ENCODE measurements at regions of chr1 and their contacts with region 1.

Region 1: GRCh38 chr1:223556414-223557129 is 108.9 kb downstream of the CAPN8 start:
- DNase-seq: peak; percentile 46 to 61
- ATAC-seq: peak; percentile 83 to 98
- H3K4me3 ChIP-seq: no peak overlapping the region
- H3K27ac ChIP-seq: no peak overlapping the region; a peak in 1 of 6 replicates
- H3K4me1 ChIP-seq: no peaks in the 10 kb centered on the region
- CTCF ChIP-seq: peak; percentile 68
- EP300 ChIP-seq: no peak
- POLR2A ChIP-seq: no peak
- RAD21 ChIP-seq: peak; percentile 83 to 94

Region 2: DNA sequence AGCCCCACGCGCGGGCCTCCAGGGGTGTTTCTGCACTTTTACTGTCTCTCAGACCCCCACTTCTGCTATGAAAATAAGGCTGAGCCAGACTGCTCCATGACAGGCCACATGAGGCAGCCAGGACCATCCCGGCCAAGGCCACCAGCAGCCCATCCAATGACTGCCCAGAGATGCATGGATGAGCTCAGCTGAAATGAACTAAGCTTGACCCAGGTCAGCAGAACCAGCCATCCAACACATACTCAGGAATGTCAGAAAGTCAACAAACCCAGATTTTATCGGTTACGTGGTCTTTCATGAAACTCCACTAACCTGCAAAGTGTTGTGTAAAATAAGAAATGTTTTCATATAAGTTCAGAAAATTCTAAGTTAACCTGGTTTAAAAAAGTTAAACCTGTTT is 112.1 kb before region 1 on chr1:
- CTCF ChIA-PET with region 1: no interaction called
- POLR2A ChIA-PET with region 1: no interaction called
- DNase-seq: no peak
- ATAC-seq: no peak
- H3K4me3 ChIP-seq: no peak overlapping the region
- H3K27ac ChIP-seq: no peak overlapping the region
- H3K4me1 ChIP-seq: no peaks in the 10 kb centered on the region
- CTCF ChIP-seq: no peak
- EP300 ChIP-seq: no peak
- POLR2A ChIP-seq: no peak
- RAD21 ChIP-seq: no peak

Region 3: DNA sequence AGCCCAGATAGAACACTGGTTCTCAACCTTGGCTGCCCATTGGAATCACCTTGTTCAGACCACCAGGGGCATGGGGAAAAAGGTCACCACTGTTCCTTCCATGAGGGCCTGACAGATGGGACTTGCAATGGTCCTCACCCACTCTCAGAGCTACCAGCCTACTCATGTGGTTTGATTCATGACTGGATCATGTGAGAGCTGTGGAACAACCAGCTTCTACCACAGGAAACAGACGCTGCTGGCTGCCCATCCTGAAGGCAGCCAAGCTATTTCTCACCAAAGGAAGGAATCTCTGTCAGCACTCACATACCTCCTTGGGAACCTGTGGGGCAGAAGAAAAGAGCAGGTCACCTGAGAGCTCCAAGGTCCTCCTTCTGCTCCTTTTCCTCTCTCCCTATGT is 55.4 kb after region 1 on chr1:
- CTCF ChIA-PET with region 1: interaction called, 65 read pairs
- POLR2A ChIA-PET with region 1: no interaction called
- DNase-seq: no peak
- ATAC-seq: no peak
- H3K4me3 ChIP-seq: no peak overlapping the region
- H3K27ac ChIP-seq: no peak overlapping the region
- H3K4me1 ChIP-seq: no peaks in the 10 kb centered on the region
- CTCF ChIP-seq: no peak
- EP300 ChIP-seq: no peak
- POLR2A ChIP-seq: no peak
- RAD21 ChIP-seq: no peak

Region 4: DNA sequence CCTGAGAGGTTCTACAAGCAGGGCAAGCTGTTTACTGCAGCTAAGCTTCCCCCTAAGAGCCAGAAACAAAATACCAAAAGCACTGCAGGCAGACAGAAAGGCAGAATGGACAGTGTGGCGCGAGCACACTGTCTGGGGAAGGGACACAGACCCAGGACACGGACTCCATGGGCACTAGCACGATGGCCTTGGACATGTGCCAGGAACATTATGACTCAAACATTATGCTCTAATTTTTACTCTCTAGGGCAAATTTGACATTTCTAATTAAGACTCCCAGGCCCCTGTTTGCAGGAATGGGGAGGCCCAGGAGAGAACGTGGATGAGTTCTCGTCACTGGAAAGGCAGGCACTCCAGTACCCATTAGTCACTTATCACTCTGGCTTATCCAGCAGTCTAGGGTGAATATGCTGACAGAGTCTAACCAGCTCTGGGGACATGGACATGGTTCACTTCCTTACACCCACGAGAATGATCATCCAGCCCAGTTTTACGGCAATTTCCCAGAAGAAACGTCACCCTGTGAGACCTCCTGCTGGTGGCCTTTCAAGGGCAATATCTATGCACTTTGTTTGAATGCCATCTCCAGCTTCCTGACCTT is 63.8 kb after region 1 on chr1:
- CTCF ChIA-PET with region 1: interaction called, 17 read pairs
- POLR2A ChIA-PET with region 1: no interaction called
- DNase-seq: no peak
- ATAC-seq: no peak
- H3K4me3 ChIP-seq: no peak overlapping the region
- H3K27ac ChIP-seq: no peak overlapping the region
- H3K4me1 ChIP-seq: no peaks in the 10 kb centered on the region
- CTCF ChIP-seq: no peak
- EP300 ChIP-seq: no peak
- POLR2A ChIP-seq: no peak
- RAD21 ChIP-seq: no peak

Region 5: DNA sequence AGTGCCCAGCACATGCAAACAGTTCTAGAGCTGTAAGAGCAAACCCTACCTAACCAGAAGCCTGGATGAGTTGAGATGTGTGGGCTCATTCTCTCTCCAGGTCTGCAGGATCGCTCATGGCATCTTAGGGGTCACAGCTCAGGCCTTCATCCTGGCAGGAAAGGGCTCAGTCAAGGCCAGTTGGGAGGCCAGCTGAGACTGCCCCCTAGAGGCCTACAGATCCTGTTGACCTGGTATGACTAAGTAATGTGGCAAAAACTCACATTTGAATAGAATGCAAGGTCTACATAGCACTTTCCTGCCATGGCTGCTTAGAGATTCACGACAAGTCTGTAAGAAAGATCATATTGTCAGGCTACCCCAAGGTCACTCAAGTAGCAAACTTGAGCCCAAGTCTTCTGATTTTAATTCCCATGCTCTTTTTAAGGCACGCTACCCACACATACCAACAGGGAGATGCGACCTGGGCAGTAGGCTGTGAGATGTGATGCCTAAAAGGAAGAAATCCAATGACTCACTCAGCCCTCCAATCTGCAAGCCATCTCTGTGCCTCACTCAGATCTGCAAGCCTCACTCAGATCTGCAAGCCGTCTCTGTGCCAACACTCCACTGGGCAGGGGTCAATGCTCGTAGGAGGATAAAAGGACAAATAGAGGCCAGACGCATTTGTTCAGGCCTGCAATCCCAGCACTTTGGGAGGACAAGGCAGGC is 114.0 kb after region 1 on chr1:
- CTCF ChIA-PET with region 1: interaction called, 31 read pairs
- POLR2A ChIA-PET with region 1: no interaction called
- DNase-seq: peak; percentile 51 to 68
- ATAC-seq: peak; percentile 81 to 95
- H3K4me3 ChIP-seq: no peak overlapping the region
- H3K27ac ChIP-seq: no peak overlapping the region
- H3K4me1 ChIP-seq: peaks cover 18% of the 10 kb centered on the region
- CTCF ChIP-seq: peak; percentile 62
- EP300 ChIP-seq: no peak
- POLR2A ChIP-seq: no peak
- RAD21 ChIP-seq: peak; percentile 74 to 83